Caco-2 (cell line): ENCODE measurements at regions of chr5 and their contacts with region 1.

Region 1: DNA sequence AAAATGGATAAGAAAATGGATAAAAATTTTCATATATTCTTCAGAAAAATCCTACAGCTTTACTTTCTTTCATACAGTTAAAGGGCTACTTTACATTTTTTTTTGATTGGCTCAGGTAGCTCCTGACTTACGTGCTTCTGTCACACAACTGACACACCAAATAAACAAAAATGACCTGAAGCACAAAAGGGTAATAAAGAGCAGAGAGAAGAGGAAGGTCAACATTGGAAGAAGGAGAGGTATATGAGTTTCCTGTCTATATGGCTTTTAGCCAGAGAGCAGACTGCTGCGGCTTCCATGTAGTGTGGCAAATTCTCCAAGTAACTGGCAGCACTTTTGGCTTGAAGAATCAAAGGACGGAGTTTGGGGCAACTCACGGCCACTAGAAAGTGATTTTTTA is 171.1 kb upstream of the CTNND2 start:
- DNase-seq: no peak
- H3K4me3 ChIP-seq: no peak overlapping the region
- H3K4me3 Mint-ChIP-seq: no peak overlapping the region
- H3K27ac Mint-ChIP-seq: no peak overlapping the region
- H3K4me1 ChIP-seq: no peaks in the 10 kb centered on the region
- H3K4me1 Mint-ChIP-seq: no peaks in the 10 kb centered on the region
- H3K27me3 ChIP-seq: no peaks in the 10 kb centered on the region
- H3K27me3 Mint-ChIP-seq: no peaks in the 10 kb centered on the region
- CTCF ChIP-seq: no peak

Region 2: GRCh38 chr5:12141496-12141895 is 66.2 kb after region 1 on chr5:
- CTCF ChIA-PET with region 1: no interaction called
- POLR2A ChIA-PET with region 1: no interaction called
- intact Hi-C with region 1: loop called (anchors 2 kb)
- DNase-seq: no peak
- H3K4me3 ChIP-seq: no peak overlapping the region
- H3K4me3 Mint-ChIP-seq: no peak overlapping the region
- H3K27ac Mint-ChIP-seq: no peak overlapping the region
- H3K4me1 ChIP-seq: no peaks in the 10 kb centered on the region
- H3K4me1 Mint-ChIP-seq: no peaks in the 10 kb centered on the region
- H3K27me3 ChIP-seq: no peaks in the 10 kb centered on the region
- H3K27me3 Mint-ChIP-seq: no peaks in the 10 kb centered on the region
- CTCF ChIP-seq: no peak

Region 3: GRCh38 chr5:12272389-12272788 is 197.1 kb after region 1 on chr5:
- CTCF ChIA-PET with region 1: no interaction called
- POLR2A ChIA-PET with region 1: no interaction called
- intact Hi-C with region 1: loop called (anchors 1 kb)
- DNase-seq: peak; percentile 36 to 41
- H3K4me3 ChIP-seq: no peak overlapping the region
- H3K4me3 Mint-ChIP-seq: no peak overlapping the region
- H3K27ac Mint-ChIP-seq: no peak overlapping the region
- H3K4me1 ChIP-seq: no peaks in the 10 kb centered on the region
- H3K4me1 Mint-ChIP-seq: no peaks in the 10 kb centered on the region
- H3K27me3 ChIP-seq: no peaks in the 10 kb centered on the region
- H3K27me3 Mint-ChIP-seq: peaks cover 12% of the 10 kb centered on the region
- CTCF ChIP-seq: peak in 1 of 2 experiments; percentile 41